B cell (primary cell): ENCODE measurements at regions of chr15 and their contacts with region 1.

Region 1: GRCh38 chr15:69719527-69720240 is 267.1 kb downstream of the RPLP1 start:
- DNase-seq: peak; percentile 81
- ATAC-seq: peak; percentile 86
- H3K4me3 ChIP-seq: no peak overlapping the region
- H3K4me3 Mint-ChIP-seq: peak overlapping the region; percentile 36
- H3K27ac ChIP-seq: peak overlapping the region; percentile 21 to 62
- H3K27ac Mint-ChIP-seq: peak overlapping the region; percentile 76
- H3K4me1 ChIP-seq: peaks cover 33 to 60% of the 10 kb centered on the region in 2 donors
- H3K4me1 Mint-ChIP-seq: peaks cover 53% of the 10 kb centered on the region
- H3K27me3 ChIP-seq: peaks cover 0 to 15% (median 4%) of the 10 kb centered on the region in 4 experiments
- H3K27me3 Mint-ChIP-seq: peaks cover 12% of the 10 kb centered on the region
- CTCF ChIP-seq: no peak

Region 2: DNA sequence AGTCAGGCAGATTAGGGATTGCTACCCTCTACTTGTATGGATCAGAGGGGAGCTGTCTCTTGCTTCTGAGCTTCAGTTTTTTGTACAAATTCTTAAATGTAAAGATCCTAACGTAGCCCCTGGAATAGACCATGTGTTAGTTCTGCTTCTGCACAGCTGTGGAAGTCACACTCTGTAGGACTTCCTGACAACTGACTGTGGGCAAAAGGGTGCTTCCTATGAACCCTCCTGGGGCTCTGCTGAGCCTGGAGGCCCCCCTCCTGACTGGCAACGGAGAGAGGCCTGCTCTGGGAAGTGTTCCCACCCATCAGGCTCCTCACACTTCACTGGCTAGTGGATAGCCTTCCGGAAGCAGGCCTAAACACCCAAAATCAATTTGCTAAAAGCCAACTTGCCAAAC is 136.1 kb before region 1 on chr15:
- CTCF ChIA-PET with region 1: interaction called, 4 read pairs
- POLR2A ChIA-PET with region 1: no interaction called
- intact Hi-C with region 1: loop called (anchors 5 kb)
- DNase-seq: peak; percentile 47
- ATAC-seq: peak; percentile 49
- H3K4me3 ChIP-seq: no peak overlapping the region
- H3K4me3 Mint-ChIP-seq: peak overlapping the region; percentile 58
- H3K27ac ChIP-seq: no peak overlapping the region
- H3K27ac Mint-ChIP-seq: peak overlapping the region; percentile 38
- H3K4me1 ChIP-seq: peaks cover 11 to 12% of the 10 kb centered on the region in 2 donors
- H3K4me1 Mint-ChIP-seq: peaks cover 15% of the 10 kb centered on the region
- H3K27me3 ChIP-seq: peaks cover 0 to 10% (median 4%) of the 10 kb centered on the region in 4 experiments
- H3K27me3 Mint-ChIP-seq: peaks cover 2% of the 10 kb centered on the region
- CTCF ChIP-seq: no peak

Region 3: DNA sequence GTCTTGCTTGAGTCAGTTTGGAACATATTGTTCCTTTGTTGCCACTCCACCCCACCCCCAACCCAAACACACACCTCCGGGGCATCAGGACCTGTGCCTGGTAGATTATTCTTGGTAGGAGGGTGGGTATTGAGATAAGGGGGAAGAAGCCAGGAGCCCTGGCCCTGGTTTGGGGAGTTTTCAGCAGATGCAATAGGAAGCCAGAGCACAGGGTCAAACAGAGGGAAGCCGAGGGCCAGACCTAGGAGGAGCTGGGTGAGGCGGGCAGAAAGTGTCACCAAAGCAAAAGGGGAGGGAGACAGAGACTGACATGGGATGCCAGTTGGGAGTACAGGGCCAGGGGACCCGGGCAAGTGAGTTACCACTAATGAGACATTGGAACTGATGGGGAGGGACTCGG is 103.9 kb before region 1 on chr15:
- CTCF ChIA-PET with region 1: no interaction called
- POLR2A ChIA-PET with region 1: no interaction called
- intact Hi-C with region 1: no loop called
- DNase-seq: no peak
- ATAC-seq: no peak
- H3K4me3 ChIP-seq: no peak overlapping the region
- H3K4me3 Mint-ChIP-seq: no peak overlapping the region
- H3K27ac ChIP-seq: no peak overlapping the region
- H3K27ac Mint-ChIP-seq: no peak overlapping the region
- H3K4me1 ChIP-seq: no peaks in the 10 kb centered on the region
- H3K4me1 Mint-ChIP-seq: no peaks in the 10 kb centered on the region
- H3K27me3 ChIP-seq: peaks cover 0 to 2% (median 0%) of the 10 kb centered on the region in 4 experiments
- H3K27me3 Mint-ChIP-seq: peaks cover 13% of the 10 kb centered on the region
- CTCF ChIP-seq: no peak

Region 4: DNA sequence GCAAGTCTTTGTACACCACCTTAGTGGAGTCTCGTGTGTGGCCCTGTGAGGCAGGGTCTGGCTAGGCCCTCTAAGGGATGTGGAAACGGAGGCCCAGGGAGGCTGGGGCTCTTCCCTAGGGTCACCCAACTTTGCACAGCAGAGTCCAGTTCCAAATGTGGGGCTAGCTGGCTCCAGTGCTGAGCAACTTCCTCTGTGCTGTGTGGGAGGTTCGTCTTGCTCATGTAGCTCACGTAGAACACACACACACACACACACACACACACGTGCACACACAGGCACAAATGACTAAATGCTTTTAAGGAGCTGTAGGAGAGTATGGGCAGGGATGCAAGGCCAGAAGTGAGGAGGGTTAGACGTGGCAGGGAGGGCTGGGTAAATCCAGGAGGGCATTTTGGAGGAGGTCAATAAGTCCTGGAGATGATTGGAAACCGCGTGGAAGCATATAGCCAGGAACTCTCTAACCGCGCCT is 53.2 kb before region 1 on chr15:
- CTCF ChIA-PET with region 1: no interaction called
- POLR2A ChIA-PET with region 1: interaction called, 3 read pairs
- intact Hi-C with region 1: loop called (anchors 2 kb)
- DNase-seq: peak; percentile 67
- ATAC-seq: peak; percentile 37
- H3K4me3 ChIP-seq: peak overlapping the region in 3 of 5 experiments; percentile 22 to 48 (median 30)
- H3K4me3 Mint-ChIP-seq: peak overlapping the region; percentile 79
- H3K27ac ChIP-seq: peak overlapping the region in 1 of 2 donors; percentile 54
- H3K27ac Mint-ChIP-seq: peak overlapping the region; percentile 80
- H3K4me1 ChIP-seq: peaks cover 44 to 55% of the 10 kb centered on the region in 2 donors
- H3K4me1 Mint-ChIP-seq: peaks cover 49% of the 10 kb centered on the region
- H3K27me3 ChIP-seq: peaks cover 0 to 7% (median 2%) of the 10 kb centered on the region in 4 experiments
- H3K27me3 Mint-ChIP-seq: peaks cover 8% of the 10 kb centered on the region
- CTCF ChIP-seq: no peak

Region 5: GRCh38 chr15:69825941-69826828 is 106.5 kb after region 1 on chr15:
- CTCF ChIA-PET with region 1: no interaction called
- POLR2A ChIA-PET with region 1: no interaction called
- intact Hi-C with region 1: no loop called
- DNase-seq: no peak
- ATAC-seq: no peak
- H3K4me3 ChIP-seq: no peak overlapping the region
- H3K4me3 Mint-ChIP-seq: no peak overlapping the region
- H3K27ac ChIP-seq: no peak overlapping the region
- H3K27ac Mint-ChIP-seq: no peak overlapping the region
- H3K4me1 ChIP-seq: no peaks in the 10 kb centered on the region
- H3K4me1 Mint-ChIP-seq: no peaks in the 10 kb centered on the region
- H3K27me3 ChIP-seq: peaks cover 0 to 10% (median 0%) of the 10 kb centered on the region in 4 experiments
- H3K27me3 Mint-ChIP-seq: peaks cover 14% of the 10 kb centered on the region
- CTCF ChIP-seq: no peak